A673 (cell line): ENCODE measurements at regions of chr9 and their contacts with region 1.

Region 1: DNA sequence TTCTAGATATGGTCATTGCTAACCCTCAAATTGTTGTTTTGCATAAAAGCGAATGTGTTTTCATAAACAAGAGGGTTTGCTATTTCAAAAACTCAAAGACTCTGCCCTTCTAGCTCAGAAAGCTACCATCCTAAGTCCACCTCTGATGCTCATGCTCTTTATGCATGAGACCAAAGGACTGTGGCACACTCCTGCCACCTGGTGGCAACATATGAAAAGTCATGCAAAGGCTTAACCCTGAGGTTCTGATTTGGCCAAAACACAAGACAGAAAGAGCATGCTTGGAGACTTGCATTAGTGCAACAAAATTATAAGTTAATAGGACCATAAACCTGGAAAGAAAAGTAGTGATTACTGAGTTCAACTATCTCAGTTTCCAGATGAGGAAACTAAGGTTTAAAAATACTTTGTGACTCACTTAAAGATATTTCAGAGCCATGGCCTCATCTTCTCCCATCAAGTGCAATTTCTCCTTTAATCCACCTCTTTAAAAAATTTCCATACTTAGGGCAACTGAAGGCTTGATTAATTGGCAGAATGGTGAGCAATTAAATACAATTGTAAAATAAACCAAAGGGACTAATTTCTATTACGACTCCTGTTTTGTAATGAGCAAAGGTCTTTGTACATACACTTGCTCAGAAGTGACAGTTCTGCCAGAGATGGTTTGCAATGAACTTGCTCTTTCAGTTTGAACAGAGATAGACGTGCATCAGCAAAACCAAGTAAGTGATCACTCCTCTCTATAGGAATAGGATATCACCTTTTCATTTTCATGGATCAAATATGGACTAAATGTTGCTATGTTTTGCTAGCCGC is 110.7 kb upstream of the RAD23B start:
- DNase-seq: peak; percentile 76
- H3K4me3 ChIP-seq: no peak overlapping the region
- H3K27ac ChIP-seq: no peak overlapping the region
- H3K4me1 ChIP-seq: no peaks in the 10 kb centered on the region
- H3K27me3 ChIP-seq: no peaks in the 10 kb centered on the region
- CTCF ChIP-seq: peak; percentile 86

Region 2: GRCh38 chr9:105842023-105842644 is 1330.2 kb before region 1 on chr9:
- CTCF ChIA-PET with region 1: interaction called, 3 read pairs
- POLR2A ChIA-PET with region 1: no interaction called
- intact Hi-C with region 1: loop called (anchors 5 kb)
- DNase-seq: peak; percentile 46
- H3K4me3 ChIP-seq: no peak overlapping the region
- H3K27ac ChIP-seq: no peak overlapping the region
- H3K4me1 ChIP-seq: no peaks in the 10 kb centered on the region
- H3K27me3 ChIP-seq: no peaks in the 10 kb centered on the region
- CTCF ChIP-seq: peak; percentile 88

Region 3: DNA sequence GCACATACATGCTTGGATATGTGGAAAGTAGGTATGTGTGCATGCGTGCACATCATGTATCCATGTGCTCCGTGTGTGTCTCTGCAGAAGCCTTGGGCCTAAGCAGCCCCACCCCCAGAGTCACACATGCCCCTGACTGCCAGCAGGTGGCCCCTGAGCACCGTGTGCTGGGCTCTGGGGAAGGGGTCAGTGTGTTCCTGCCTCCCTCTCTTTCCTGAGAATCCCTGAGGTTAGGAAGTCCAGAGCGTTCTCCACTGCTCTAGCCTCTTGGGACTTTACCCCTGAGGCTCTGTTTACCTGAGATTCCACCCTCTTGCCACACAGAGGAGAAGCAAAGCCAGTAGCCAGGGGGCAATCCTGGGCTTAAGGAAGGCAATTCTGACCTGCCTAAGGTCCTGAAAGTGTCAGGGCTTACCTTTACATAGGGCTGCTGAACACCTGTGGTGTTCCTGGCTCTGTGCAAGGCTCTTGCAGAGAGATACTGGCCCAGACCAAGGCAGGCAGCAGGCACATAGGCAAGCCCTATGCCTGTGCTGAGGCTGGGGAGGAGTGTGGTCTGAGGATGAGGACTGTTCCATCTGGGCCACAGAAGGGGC is 1270.8 kb before region 1 on chr9:
- CTCF ChIA-PET with region 1: interaction called, 4 read pairs
- POLR2A ChIA-PET with region 1: no interaction called
- intact Hi-C with region 1: loop called (anchors 2 kb)
- DNase-seq: peak; percentile 22
- H3K4me3 ChIP-seq: no peak overlapping the region
- H3K27ac ChIP-seq: no peak overlapping the region
- H3K4me1 ChIP-seq: no peaks in the 10 kb centered on the region
- H3K27me3 ChIP-seq: no peaks in the 10 kb centered on the region
- CTCF ChIP-seq: peak; percentile 51

Region 4: DNA sequence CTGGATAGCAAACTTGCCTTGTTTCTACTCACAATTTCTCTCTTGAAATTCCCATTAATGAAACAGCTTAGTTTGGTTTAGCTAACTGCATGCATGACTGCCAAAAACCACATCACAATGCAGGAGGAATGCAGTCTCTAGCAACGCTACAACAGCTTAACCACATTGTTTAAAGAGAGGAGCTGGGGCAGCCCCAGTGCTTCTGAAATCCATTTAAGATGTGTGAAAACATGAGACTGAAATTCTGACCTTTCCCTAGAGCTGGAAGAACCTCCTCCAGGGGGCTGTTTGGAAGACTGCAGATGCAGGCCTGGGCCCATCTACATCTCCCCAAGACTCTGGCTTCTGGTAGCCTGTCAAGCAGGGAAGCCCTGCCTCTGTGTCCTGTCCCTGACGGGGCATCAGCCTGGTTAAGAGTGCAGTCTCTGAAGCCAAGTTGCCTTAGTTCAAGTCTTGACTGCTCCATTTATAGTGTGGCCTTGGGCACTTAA is 152.3 kb before region 1 on chr9:
- CTCF ChIA-PET with region 1: no interaction called
- POLR2A ChIA-PET with region 1: no interaction called
- intact Hi-C with region 1: no loop called
- DNase-seq: peak; percentile 5
- H3K4me3 ChIP-seq: no peak overlapping the region
- H3K27ac ChIP-seq: no peak overlapping the region
- H3K4me1 ChIP-seq: no peaks in the 10 kb centered on the region
- H3K27me3 ChIP-seq: no peaks in the 10 kb centered on the region
- CTCF ChIP-seq: no peak

Region 5: DNA sequence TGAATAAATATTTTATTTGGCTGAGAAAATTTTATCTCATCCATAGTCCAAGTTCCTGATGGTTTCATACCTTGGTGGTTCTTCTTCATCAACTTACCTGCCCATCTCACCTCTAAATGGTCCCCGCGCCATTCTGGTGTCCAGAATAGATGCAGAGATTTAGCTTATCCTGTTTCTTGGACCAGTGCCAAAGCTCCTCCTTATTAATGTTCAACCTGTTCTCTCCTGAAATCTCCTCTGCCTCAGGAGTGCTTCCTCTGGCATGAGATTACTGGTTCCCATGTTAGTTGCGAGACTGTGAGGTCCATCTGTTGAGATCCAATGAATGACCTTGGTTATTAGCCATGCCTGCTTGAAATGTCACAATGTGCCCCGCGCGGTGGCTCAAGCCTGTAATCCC is 69.7 kb before region 1 on chr9:
- CTCF ChIA-PET with region 1: no interaction called
- POLR2A ChIA-PET with region 1: no interaction called
- intact Hi-C with region 1: no loop called
- DNase-seq: no peak
- H3K4me3 ChIP-seq: no peak overlapping the region
- H3K27ac ChIP-seq: no peak overlapping the region
- H3K4me1 ChIP-seq: no peaks in the 10 kb centered on the region
- H3K27me3 ChIP-seq: no peaks in the 10 kb centered on the region
- CTCF ChIP-seq: no peak